Mammary epithelial cell (primary cell): ENCODE measurements at regions of chr4 and their contacts with region 1.

Region 1: GRCh38 chr4:169341490-169341889 is 70.7 kb upstream of the SH3RF1 start:
- DNase-seq: peak; percentile 24
- H3K4me3 ChIP-seq: no peak overlapping the region
- H3K27ac ChIP-seq: no peak overlapping the region
- H3K4me1 ChIP-seq: peaks cover 44% of the 10 kb centered on the region
- H3K27me3 ChIP-seq: no peaks in the 10 kb centered on the region
- CTCF ChIP-seq: no peak

Region 2: GRCh38 chr4:168981460-168981859 is 360.0 kb before region 1 on chr4:
- CTCF ChIA-PET with region 1: no interaction called
- dilution Hi-C with region 1: no loop called
- in situ Hi-C with region 1: no loop called
- intact Hi-C with region 1: no loop called
- DNase-seq: peak; percentile 18
- H3K4me3 ChIP-seq: no peak overlapping the region
- H3K27ac ChIP-seq: no peak overlapping the region
- H3K4me1 ChIP-seq: peaks cover 12% of the 10 kb centered on the region
- H3K27me3 ChIP-seq: no peaks in the 10 kb centered on the region
- CTCF ChIP-seq: no peak

Region 3: GRCh38 chr4:169189372-169189771 is 152.1 kb before region 1 on chr4:
- CTCF ChIA-PET with region 1: no interaction called
- dilution Hi-C with region 1: no loop called
- in situ Hi-C with region 1: no loop called
- intact Hi-C with region 1: no loop called
- DNase-seq: no peak
- H3K4me3 ChIP-seq: no peak overlapping the region
- H3K27ac ChIP-seq: no peak overlapping the region
- H3K4me1 ChIP-seq: peaks cover 16% of the 10 kb centered on the region
- H3K27me3 ChIP-seq: no peaks in the 10 kb centered on the region
- CTCF ChIP-seq: no peak

Region 4: GRCh38 chr4:169254546-169254983 is 86.9 kb before region 1 on chr4:
- CTCF ChIA-PET with region 1: no interaction called
- dilution Hi-C with region 1: loop called (anchors 5 kb)
- in situ Hi-C with region 1: no loop called
- intact Hi-C with region 1: no loop called
- DNase-seq: peak; percentile 45
- H3K4me3 ChIP-seq: no peak overlapping the region
- H3K27ac ChIP-seq: peak overlapping the region; percentile 36
- H3K4me1 ChIP-seq: peaks cover 60% of the 10 kb centered on the region
- H3K27me3 ChIP-seq: no peaks in the 10 kb centered on the region
- CTCF ChIP-seq: no peak